Gastrocnemius medialis (tissue), 4 donors: ENCODE measurements at regions of chr2 and their contacts with region 1.

Region 1: DNA sequence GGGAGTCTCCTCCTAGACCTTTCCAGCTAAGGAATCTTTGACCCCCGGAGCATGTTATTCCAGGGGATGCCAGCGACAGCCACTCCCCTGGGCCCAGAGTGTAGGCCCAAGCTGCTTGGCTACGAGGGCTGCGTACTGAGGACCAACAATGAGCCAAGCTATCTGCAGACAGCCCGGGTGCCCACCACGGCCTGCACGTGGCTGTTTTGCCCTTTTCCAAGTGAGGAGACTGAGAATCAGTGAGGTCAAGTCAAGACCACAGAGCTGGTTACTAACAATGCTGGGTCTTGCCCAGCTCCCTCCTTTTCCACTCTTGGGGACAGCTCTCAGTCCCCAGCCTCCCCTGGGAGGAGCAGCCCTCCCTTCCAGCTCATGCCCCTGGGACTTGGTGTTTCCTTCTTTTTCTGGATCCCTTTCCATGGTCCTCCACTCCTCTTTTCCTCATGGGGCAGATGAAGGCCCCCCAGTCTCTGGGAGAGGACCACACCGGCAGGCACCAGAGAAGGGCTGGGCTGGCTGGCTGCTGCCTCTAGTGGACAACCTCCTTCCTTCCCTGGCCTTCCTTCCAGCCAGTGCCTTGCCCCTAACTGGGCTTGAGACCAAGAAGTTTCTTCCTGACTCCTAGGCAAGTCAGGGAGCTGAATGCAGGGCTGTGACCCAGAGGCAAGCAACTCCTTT is 550 bp upstream of the MALL start:
- DNase-seq: no peak
- ATAC-seq: peak; percentile 16 to 49
- H3K4me3 ChIP-seq: peak overlapping the region; percentile 42 to 55 (median 50)
- H3K27ac ChIP-seq: peak overlapping the region in 3 of 4 donors; percentile 41 to 62 (median 51)
- H3K4me1 ChIP-seq: peaks cover 9 to 12% of the 10 kb centered on the region in 2 donors
- H3K27me3 ChIP-seq: peaks cover 26 to 45% (median 32%) of the 10 kb centered on the region in 3 donors
- CTCF ChIP-seq: peak in 3 of 5 experiments; percentile 12 to 58 (median 38)
- POLR2A ChIP-seq: no peak

Region 2: DNA sequence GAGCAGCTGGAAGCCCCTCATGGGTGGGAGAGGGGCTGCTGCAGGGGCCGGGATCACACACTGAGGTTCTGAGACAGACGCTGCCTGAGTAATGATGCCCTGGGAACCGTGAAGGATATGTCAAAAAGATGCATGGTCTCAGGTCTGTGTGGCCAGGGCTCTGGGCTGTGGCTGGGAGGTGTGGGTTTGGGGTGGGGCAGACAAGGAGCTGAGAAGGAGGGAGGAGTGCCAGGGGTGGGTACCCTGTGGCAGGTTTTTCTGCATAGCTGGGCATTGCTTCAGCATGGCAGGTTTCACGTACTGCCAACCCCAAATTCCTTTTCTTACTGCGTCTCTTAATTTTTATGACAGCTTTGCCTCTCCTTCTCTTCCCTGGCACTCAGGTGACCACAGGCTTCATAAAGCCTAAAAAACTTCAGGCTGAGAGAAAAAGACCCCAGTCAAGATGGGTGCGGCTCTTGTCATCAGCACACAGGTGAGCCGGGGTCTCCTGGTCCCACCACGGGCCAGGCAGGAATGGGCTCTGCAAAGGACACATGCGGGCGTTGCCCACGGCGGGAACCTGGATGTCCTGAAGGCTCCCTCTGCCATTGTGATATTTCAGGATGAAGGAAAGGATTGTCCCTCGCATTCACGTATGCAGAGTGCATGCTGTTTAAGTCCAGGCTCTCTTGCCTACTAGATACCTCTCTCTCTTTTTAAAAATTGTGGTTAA is 18.5 kb before region 1 on chr2:
- in situ Hi-C with region 1: no loop called
- intact Hi-C with region 1: no loop called
- DNase-seq: no peak
- ATAC-seq: no peak
- H3K4me3 ChIP-seq: no peak overlapping the region
- H3K27ac ChIP-seq: no peak overlapping the region
- H3K4me1 ChIP-seq: peaks cover 4 to 13% of the 10 kb centered on the region in 2 donors
- H3K27me3 ChIP-seq: no peaks in the 10 kb centered on the region
- CTCF ChIP-seq: no peak
- POLR2A ChIP-seq: no peak

Region 3: DNA sequence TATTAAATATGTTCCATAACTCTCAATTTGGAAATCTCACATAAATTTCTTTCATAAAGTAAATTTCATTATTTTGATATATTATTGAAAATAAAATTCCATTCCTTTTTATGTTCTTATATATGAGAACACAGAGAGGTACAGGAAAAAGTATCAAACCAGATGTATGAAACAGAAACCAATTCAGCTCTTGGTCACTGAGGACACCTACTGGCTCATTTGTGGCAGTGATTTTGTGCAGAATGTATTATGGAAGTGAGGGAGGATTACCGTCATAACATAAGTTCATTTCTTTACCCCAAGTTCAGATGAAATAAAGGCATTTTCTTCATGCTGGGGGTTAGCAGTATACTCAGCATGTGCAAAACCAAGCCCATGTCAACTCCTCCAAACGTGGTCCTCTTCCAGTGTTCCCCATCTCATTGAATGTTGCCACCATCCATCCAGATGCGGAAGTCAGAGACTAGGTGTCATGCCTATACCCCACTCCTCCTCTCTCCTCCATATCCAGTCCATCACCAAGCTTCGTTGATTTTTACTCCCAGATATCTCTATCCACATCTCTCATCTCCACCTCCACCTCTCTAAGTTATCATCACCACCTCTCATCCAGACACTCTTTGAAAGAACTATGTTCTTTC is 41.1 kb after region 1 on chr2:
- in situ Hi-C with region 1: no loop called
- intact Hi-C with region 1: loop called (anchors 5 kb)
- DNase-seq: no peak
- ATAC-seq: peak in 1 of 2 donors; percentile 80
- H3K4me3 ChIP-seq: no peak overlapping the region
- H3K27ac ChIP-seq: peak overlapping the region in 2 of 4 donors; percentile 43 to 53
- H3K4me1 ChIP-seq: no peaks in the 10 kb centered on the region
- H3K27me3 ChIP-seq: no peaks in the 10 kb centered on the region
- CTCF ChIP-seq: peak; percentile 30 to 77 (median 42)
- POLR2A ChIP-seq: no peak

Region 4: GRCh38 chr2:110688594-110689091 is 572.5 kb after region 1 on chr2:
- in situ Hi-C with region 1: no loop called
- intact Hi-C with region 1: no loop called
- DNase-seq: no peak
- ATAC-seq: no peak
- H3K4me3 ChIP-seq: no peak overlapping the region
- H3K27ac ChIP-seq: no peak overlapping the region
- H3K4me1 ChIP-seq: no peaks in the 10 kb centered on the region
- H3K27me3 ChIP-seq: peaks cover 0 to 5% (median 0%) of the 10 kb centered on the region in 3 donors
- CTCF ChIP-seq: no peak
- POLR2A ChIP-seq: no peak

Region 5: GRCh38 chr2:110713513-110714362 is 597.6 kb after region 1 on chr2:
- in situ Hi-C with region 1: no loop called
- intact Hi-C with region 1: no loop called
- DNase-seq: no peak
- ATAC-seq: no peak
- H3K4me3 ChIP-seq: no peak overlapping the region
- H3K27ac ChIP-seq: no peak overlapping the region
- H3K4me1 ChIP-seq: peaks cover 3 to 6% of the 10 kb centered on the region in 2 donors
- H3K27me3 ChIP-seq: no peaks in the 10 kb centered on the region
- CTCF ChIP-seq: no peak
- POLR2A ChIP-seq: no peak